ENCODE measurements at regions of chr10 and their contacts with region 1.

Region 1: DNA sequence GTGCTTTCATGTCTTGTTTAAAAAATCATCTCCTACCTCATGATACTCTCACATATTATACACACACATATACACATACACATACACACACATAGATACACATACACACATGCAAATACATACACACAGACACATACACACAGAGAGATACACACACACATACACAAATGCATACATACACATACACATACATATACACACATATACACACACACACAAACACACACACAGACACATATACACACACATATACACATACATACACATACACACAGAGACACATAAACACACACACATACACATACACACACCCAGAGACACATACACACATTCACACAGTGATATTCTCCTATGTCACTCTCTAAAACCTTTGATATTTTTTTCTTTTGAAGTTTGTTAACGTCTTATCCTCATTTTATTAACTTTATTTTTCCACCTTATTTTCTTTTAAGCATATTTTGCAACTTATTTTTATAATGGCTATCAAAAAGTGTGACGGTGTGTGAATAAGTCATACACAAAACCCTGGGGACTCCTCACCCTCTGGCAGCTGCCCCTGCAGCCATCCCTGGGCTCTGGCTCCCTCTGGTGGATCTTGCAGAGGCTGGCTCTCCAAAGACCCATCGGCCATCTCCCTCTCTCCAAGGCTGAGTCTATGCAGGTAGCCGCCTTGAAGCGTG is 3.9 kb upstream of the C10orf120 start:
- DNase-seq: peak; percentile 80
- H3K4me3 Mint-ChIP-seq: no peak overlapping the region
- H3K27ac Mint-ChIP-seq: no peak overlapping the region
- H3K4me1 Mint-ChIP-seq: no peaks in the 10 kb centered on the region
- H3K27me3 Mint-ChIP-seq: no peaks in the 10 kb centered on the region
- CTCF ChIP-seq: peak; percentile 89

Region 2: GRCh38 chr10:122279725-122280141 is 423.8 kb before region 1 on chr10:
- CTCF ChIA-PET with region 1: interaction called, 3 read pairs
- POLR2A ChIA-PET with region 1: no interaction called
- intact Hi-C with region 1: loop called (anchors 1 kb)
- DNase-seq: peak; percentile 71
- H3K4me3 Mint-ChIP-seq: no peak overlapping the region
- H3K27ac Mint-ChIP-seq: no peak overlapping the region
- H3K4me1 Mint-ChIP-seq: peaks cover 14% of the 10 kb centered on the region
- H3K27me3 Mint-ChIP-seq: no peaks in the 10 kb centered on the region
- CTCF ChIP-seq: peak; percentile 66

Region 3: GRCh38 chr10:122298598-122299301 is 404.8 kb before region 1 on chr10:
- CTCF ChIA-PET with region 1: interaction called, 7 read pairs
- POLR2A ChIA-PET with region 1: no interaction called
- intact Hi-C with region 1: loop called (anchors 1 kb)
- DNase-seq: peak; percentile 86
- H3K4me3 Mint-ChIP-seq: no peak overlapping the region
- H3K27ac Mint-ChIP-seq: no peak overlapping the region
- H3K4me1 Mint-ChIP-seq: peaks cover 38% of the 10 kb centered on the region
- H3K27me3 Mint-ChIP-seq: no peaks in the 10 kb centered on the region
- CTCF ChIP-seq: peak; percentile 82

Region 4: DNA sequence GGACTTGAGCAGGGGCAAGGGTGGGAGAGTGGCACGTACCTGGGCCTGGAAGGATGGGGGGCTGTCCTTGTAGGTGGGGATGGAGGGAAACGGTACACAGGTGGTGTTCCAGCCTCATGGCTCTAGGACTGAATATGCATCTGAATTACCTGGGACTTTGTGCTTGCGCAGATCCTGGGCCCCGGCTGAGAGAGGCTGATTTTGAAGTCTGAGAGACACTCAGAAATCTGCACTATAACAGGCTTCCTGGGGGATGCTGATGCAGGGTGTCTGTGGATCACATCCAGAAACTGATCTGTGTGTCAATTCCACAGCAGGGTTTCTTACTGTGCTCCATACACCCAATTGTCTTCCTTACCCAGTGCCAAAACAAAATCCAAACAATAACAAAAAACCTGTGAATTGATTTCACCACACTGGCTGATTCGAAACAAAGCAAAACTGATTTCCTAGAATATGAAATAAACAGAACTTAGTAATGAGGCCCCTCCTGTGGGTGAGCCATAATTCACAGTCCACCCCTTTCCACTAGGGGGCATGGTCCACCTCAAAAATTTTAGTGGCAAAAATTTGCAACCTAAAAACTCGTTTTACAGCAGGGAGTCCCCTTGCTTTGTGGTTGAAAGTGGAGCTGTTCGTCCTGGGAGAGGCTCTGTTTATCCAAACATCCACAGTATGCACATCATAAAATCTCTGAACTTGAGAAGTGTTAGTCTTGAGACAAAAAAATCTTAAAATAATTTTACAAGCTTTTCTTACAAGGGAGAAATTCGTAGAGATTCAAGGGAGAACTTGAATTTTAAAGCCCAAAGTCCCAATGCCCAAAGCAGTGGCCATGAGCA is 361.1 kb before region 1 on chr10:
- CTCF ChIA-PET with region 1: interaction called, 3 read pairs
- POLR2A ChIA-PET with region 1: interaction called, 3 read pairs
- intact Hi-C with region 1: loop called (anchors 1 kb)
- DNase-seq: peak; percentile 72
- H3K4me3 Mint-ChIP-seq: no peak overlapping the region
- H3K27ac Mint-ChIP-seq: no peak overlapping the region
- H3K4me1 Mint-ChIP-seq: peaks cover 12% of the 10 kb centered on the region
- H3K27me3 Mint-ChIP-seq: no peaks in the 10 kb centered on the region
- CTCF ChIP-seq: peak; percentile 54

Region 5: DNA sequence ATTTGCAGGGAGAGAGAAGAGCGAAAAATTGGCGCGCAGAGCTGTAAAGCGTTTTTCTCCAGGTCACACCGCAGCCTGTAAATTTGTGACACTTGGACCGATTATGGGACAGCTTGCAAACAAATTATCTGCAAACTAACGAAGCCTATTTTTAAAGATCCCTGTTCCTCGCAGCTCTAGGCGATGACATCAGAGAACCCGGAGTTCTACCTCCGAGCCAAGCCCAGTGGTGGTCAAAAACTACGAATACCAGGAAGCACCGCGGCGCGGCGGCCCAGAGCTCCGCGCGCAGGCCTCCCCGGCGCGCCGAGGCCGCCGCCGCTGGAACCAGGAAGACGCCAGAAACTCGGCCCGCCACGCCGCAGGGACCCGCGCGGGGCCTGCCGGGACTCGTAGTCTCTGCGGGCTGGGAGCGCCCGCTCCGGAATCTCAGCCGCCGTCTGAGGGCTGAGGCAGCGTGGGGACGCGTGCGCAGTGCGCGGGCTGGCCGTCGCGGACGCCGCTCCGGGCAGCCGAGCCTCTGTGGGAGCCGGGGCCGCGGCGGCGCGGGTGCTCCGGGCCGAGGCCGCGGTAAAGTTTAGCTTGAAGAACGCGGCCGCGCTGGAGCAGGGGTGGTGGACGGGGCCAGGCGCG is 329.2 kb before region 1 on chr10 and contains the start of gene PLEKHA1:
- CTCF ChIA-PET with region 1: no interaction called
- POLR2A ChIA-PET with region 1: no interaction called
- intact Hi-C with region 1: no loop called
- DNase-seq: peak; percentile 93
- H3K4me3 Mint-ChIP-seq: peak within 1 kb of the TSS; percentile 93
- H3K27ac Mint-ChIP-seq: peak within 1 kb of the TSS; percentile 89
- H3K4me1 Mint-ChIP-seq: peaks cover 25% of the 10 kb centered on the region
- H3K27me3 Mint-ChIP-seq: no peaks in the 10 kb centered on the region
- CTCF ChIP-seq: peak; percentile 13
- total RNA-seq, gene PLEKHA1: 55.8 and 56.7 TPM in 2 replicates

Region 6: DNA sequence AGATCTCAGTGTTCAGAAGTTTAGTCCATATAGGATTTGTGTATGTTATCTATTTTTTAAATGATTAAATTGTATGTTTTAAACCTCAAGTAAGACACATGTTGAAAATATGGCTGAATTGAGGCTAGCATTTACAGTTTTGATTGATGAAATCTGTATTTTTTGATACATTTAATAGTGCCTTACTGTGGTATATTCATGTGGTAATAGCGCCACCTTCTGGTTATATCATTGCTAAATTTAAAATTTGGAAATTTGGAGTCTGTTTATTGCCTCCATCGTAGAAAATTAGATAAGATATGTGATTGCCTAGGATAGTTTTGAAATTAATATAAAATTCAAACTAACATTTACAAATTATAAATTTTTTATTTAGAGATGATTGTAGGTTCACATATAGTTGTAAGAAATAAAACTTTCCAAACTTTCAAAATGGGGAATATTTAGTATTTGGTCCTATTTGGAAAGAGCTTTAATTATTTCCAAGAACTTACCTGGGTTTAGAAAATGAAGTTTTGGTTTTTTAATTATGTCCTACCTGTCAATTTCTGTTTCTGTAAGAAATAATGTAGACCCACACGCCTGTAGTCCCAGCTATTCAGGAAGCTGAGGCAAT is 268.3 kb before region 1 on chr10:
- CTCF ChIA-PET with region 1: no interaction called
- POLR2A ChIA-PET with region 1: no interaction called
- intact Hi-C with region 1: loop called (anchors 2 kb)
- DNase-seq: peak; percentile 55
- H3K4me3 Mint-ChIP-seq: no peak overlapping the region
- H3K27ac Mint-ChIP-seq: no peak overlapping the region
- H3K4me1 Mint-ChIP-seq: no peaks in the 10 kb centered on the region
- H3K27me3 Mint-ChIP-seq: no peaks in the 10 kb centered on the region
- CTCF ChIP-seq: peak; percentile 51

Region 7: GRCh38 chr10:122525788-122526187 is 177.8 kb before region 1 on chr10:
- CTCF ChIA-PET with region 1: interaction called, 5 read pairs
- POLR2A ChIA-PET with region 1: no interaction called
- intact Hi-C with region 1: loop called (anchors 1 kb)
- DNase-seq: peak; percentile 59
- H3K4me3 Mint-ChIP-seq: no peak overlapping the region
- H3K27ac Mint-ChIP-seq: no peak overlapping the region
- H3K4me1 Mint-ChIP-seq: peaks cover 3% of the 10 kb centered on the region
- H3K27me3 Mint-ChIP-seq: no peaks in the 10 kb centered on the region
- CTCF ChIP-seq: peak; percentile 16

Region 8: DNA sequence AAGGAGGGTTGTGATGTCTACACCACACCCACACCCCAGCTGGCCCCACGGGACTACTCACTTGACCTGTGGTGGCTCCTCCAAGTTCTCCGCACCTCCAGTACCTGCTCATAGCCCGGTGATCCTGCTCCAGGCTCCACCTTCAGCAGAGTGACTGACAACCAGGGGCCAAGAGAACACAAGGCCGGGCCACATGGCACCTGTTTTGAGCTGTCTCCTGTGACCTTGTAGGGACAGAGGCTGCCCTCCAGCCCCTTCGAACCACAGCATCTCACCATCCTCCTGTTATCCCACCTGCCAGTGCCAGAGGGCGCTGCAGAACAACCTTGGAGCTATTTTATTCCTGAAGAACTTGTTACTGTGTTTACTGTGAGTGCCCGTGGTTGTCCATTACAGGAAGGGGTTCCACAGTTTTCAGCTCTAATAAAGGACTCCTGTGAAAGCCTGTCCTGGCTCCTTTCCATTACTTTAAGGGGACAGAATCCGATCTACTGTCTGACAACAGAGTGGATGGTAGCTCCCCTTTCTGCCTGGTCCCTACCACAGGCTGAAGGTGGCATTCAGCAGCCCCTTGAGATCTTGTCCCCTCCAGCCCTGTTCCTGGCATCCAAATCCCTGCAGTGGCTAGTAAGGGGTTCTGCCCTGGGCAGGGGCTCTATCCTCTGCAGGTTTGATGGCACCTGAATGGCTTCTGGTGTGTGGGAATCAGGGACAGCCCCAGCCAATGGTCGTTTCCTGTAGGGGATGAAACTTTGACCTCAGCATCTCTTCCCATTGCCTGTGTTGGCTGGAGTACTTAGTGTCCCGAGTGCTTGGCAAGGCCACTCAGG is 54.8 kb before region 1 on chr10:
- CTCF ChIA-PET with region 1: interaction called, 27 read pairs
- POLR2A ChIA-PET with region 1: no interaction called
- intact Hi-C with region 1: loop called (anchors 1 kb)
- DNase-seq: peak; percentile 68
- H3K4me3 Mint-ChIP-seq: no peak overlapping the region
- H3K27ac Mint-ChIP-seq: no peak overlapping the region
- H3K4me1 Mint-ChIP-seq: no peaks in the 10 kb centered on the region
- H3K27me3 Mint-ChIP-seq: peaks cover 28% of the 10 kb centered on the region
- CTCF ChIP-seq: peak; percentile 70

Measured in MCF 10A (cell line).